PC-9 (cell line): ENCODE measurements at regions of chr17 and their contacts with region 1.

Region 1: DNA sequence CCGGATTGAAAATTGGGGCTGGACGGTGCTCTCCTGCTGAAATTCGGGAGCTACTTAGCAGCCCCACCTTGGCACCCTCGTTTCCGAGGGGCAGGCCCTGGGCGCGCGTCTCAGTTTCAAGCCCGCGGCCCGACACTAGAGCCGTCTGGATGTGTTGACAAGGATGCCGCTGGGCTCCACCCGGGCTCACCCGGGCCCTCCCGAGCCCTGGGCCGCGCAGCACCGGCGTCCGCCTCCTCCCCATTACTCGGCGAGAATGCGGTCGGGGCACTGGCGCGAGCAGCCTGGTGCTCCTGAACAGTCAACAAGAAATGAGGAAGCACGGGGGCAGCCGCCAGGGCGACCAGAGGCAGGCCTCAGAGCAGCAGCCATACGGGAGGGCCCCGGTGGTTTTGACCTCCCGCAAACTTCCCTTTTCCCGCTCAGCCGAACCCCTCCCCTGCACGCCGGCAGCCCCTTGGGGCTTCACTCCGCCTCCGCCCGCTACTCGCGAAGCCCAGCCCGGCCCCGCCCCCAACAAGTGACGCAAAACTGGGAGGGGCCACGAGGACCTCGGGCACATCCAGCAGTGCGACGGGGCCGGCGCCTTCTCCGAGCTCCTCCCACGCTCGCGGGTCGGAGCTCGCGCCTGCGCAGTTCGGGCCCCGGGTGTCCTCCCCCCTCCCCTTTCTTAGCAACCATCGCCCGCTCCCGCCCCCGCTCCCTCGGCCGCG is 447 bp upstream of the SEC14L1 start:
- DNase-seq: peak; percentile 81 to 98
- H3K4me3 ChIP-seq: peak overlapping the region; percentile 61
- H3K27ac ChIP-seq: peak overlapping the region; percentile 72
- H3K4me1 ChIP-seq: peaks cover 38% of the 10 kb centered on the region
- H3K27me3 ChIP-seq: no peaks in the 10 kb centered on the region
- CTCF ChIP-seq: no peak

Region 2: GRCh38 chr17:77124192-77124889 is 16.0 kb before region 1 on chr17:
- CTCF ChIA-PET with region 1: interaction called, 22 read pairs
- POLR2A ChIA-PET with region 1: interaction called, 8 read pairs
- intact Hi-C with region 1: loop called (anchors 1 kb)
- DNase-seq: peak; percentile 69 to 87
- H3K4me3 ChIP-seq: peak overlapping the region; percentile 25; the same call in 1 of the 2 replicates
- H3K27ac ChIP-seq: peak overlapping the region; percentile 98
- H3K4me1 ChIP-seq: peaks cover 54% of the 10 kb centered on the region
- H3K27me3 ChIP-seq: no peaks in the 10 kb centered on the region
- CTCF ChIP-seq: no peak

Region 3: DNA sequence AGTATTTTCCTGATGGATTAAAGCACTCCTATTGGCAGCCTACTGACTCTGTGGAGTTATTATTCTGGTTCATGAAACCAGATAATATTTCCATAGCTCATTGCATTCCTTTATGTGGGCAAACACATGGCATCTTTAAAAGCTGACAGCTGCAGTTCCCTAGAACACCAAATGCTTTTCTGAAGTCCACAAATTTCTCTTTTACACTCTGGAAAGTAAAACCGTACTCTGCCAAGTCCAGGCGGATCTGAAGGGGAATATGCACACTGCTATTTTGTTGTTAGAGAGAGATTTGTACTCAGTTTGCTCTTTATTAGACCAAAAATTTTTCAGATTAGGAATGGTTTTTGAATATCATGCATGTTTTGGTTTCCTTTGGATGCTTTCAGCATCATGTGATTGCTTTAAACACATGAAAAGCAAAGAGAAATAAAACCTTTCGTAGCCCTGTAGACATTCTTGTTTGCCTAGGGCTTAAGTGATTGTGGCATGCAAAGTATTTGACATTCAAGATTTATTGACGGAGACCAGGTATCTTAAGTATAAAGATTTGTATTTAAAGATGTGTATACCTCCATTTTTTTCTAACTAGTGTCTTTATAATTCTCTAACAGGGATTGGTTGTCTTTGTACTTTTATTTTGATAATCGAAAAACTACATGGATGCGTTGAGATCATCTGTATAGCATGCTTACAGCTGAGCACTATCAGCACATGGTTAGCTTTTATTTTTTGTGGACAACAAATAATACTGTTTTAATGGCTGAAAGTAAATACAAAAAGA is 20.0 kb after region 1 on chr17:
- CTCF ChIA-PET with region 1: interaction called, 3 read pairs
- POLR2A ChIA-PET with region 1: interaction called, 14 read pairs
- intact Hi-C with region 1: no loop called
- DNase-seq: no peak
- H3K4me3 ChIP-seq: no peak overlapping the region
- H3K27ac ChIP-seq: no peak overlapping the region
- H3K4me1 ChIP-seq: no peaks in the 10 kb centered on the region
- H3K27me3 ChIP-seq: no peaks in the 10 kb centered on the region
- CTCF ChIP-seq: no peak